ENCODE measurements at regions of chr2 and their contacts with region 1.

Region 1: DNA sequence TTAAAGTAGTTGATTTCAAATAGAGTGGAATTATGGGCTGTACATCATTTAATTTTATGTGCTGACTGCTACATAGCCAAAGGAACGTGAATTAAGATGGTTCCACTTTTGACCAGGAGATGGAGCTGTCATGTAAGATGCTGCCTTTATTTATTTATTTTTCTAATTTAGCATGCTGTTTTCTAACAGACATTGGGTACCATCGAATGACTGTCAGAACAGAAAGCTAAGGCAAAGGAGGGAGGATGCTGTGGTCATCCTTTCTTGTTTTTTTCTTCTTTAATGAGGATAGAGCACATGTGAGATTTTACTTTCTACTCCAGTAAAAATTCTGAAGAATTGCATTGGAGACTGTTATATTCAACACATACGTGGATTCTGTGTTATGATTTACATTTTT is at the start of gene SCN2A:
- DNase-seq: no peak
- H3K4me3 ChIP-seq: no peak within 1 kb of the TSS
- H3K27ac ChIP-seq: no peak within 1 kb of the TSS
- H3K4me1 ChIP-seq: no peaks in the 10 kb centered on the region
- H3K27me3 ChIP-seq: no peaks in the 10 kb centered on the region
- CTCF ChIP-seq: peak in 2 of 3 experiments; percentile 61 to 63; a peak in 3 of 4 replicates
- EP300 ChIP-seq: no peak
- POLR2A ChIP-seq: no peak
- RAD21 ChIP-seq: peak; percentile 80
- total RNA-seq, gene SCN2A: 0.61 and 1.1 TPM in 2 replicates

Region 2: GRCh38 chr2:165173215-165173614 is 66.0 kb before region 1 on chr2:
- CTCF ChIA-PET with region 1: no interaction called
- POLR2A ChIA-PET with region 1: no interaction called
- DNase-seq: no peak
- H3K4me3 ChIP-seq: no peak overlapping the region
- H3K27ac ChIP-seq: no peak overlapping the region
- H3K4me1 ChIP-seq: no peaks in the 10 kb centered on the region
- H3K27me3 ChIP-seq: peaks cover 0 to 1% (median 0%) of the 10 kb centered on the region in 4 experiments; a peak in 1 of 7 replicates
- CTCF ChIP-seq: no peak
- EP300 ChIP-seq: no peak
- POLR2A ChIP-seq: no peak
- RAD21 ChIP-seq: no peak

Region 3: DNA sequence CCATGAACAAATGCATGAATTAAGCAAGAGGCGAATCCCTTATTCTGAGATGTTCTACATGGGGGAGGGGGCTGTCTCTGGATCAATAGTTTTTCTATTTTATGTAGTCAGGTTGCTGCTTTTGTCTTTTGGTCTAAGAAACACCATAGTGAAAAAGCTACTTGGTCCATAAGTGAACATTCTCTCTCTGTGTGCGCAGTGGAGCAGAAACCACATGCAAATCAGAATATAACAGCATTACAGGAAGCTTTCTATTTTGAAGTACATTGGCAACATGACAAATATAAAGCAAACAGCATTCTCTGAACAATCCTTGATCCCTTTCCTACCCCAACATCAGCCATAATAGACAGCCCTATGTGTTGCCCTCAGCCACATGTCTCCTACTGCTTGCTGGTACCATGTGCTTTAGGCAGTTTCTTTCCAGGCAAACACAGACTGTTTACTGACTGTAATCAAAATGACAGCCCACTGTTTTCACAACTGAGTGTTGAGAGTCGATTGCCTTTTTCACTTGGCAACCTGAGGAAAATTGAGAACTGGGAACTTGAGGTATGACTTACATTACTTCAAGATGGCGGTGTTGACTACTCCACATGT is 46.0 kb before region 1 on chr2:
- CTCF ChIA-PET with region 1: no interaction called
- POLR2A ChIA-PET with region 1: no interaction called
- DNase-seq: no peak
- H3K4me3 ChIP-seq: no peak overlapping the region
- H3K27ac ChIP-seq: no peak overlapping the region
- H3K4me1 ChIP-seq: peaks cover 0 to 2% (median 0%) of the 10 kb centered on the region in 4 experiments; a peak in 1 of 7 replicates
- H3K27me3 ChIP-seq: no peaks in the 10 kb centered on the region
- CTCF ChIP-seq: no peak
- EP300 ChIP-seq: no peak
- POLR2A ChIP-seq: no peak
- RAD21 ChIP-seq: no peak

Region 4: DNA sequence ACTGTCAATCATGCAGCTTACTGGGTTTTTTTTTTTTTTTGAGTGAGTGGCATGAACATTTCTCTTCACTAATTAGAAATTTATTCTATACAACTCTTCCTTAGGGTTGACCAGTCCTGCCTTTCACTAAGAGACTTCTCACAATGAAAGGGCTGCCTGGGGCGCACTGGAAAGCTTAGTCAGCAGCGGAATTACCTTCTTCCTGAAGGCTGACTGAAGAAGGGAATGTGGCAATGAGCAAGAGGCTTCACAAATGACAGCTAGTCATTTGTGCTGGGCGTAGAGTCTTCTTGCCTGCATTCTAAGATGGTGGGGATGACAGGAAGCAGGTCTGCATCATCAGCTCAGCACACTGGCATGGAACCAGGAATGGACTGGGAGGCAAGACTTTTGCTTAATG is 19.7 kb before region 1 on chr2:
- CTCF ChIA-PET with region 1: interaction called, 12 read pairs
- POLR2A ChIA-PET with region 1: no interaction called
- DNase-seq: no peak
- H3K4me3 ChIP-seq: no peak overlapping the region
- H3K27ac ChIP-seq: no peak overlapping the region
- H3K4me1 ChIP-seq: no peaks in the 10 kb centered on the region
- H3K27me3 ChIP-seq: no peaks in the 10 kb centered on the region
- CTCF ChIP-seq: no peak
- EP300 ChIP-seq: no peak
- POLR2A ChIP-seq: no peak
- RAD21 ChIP-seq: no peak

Region 5: DNA sequence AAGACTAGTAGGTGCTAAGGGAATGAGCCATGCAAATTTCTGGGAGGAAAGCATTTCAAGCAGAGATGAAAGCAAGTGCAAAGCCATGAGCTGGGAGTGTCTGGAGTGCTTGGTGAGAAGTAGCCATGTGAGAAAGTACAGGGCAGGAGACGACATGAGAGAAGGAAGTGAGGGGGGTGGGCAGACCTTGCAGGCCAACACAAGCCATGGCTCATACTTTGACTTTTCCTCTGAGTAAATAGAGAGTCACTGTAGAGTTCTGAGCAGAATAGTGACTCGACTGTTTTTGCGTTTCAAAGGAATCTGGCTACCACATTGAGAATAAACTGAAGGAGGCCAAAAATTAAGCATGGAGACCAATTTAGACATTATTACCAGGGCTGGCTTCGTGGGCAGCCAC is 42.2 kb after region 1 on chr2:
- CTCF ChIA-PET with region 1: no interaction called
- POLR2A ChIA-PET with region 1: no interaction called
- DNase-seq: no peak
- H3K4me3 ChIP-seq: no peak overlapping the region
- H3K27ac ChIP-seq: no peak overlapping the region
- H3K4me1 ChIP-seq: 0 out of 7 replicates have a peak, but pooled peaks cover 0 to 2% (median 0%) of the 10 kb centered on the region in 4 experiments
- H3K27me3 ChIP-seq: no peaks in the 10 kb centered on the region
- CTCF ChIP-seq: no peak
- EP300 ChIP-seq: no peak
- POLR2A ChIP-seq: no peak
- RAD21 ChIP-seq: no peak

Region 6: DNA sequence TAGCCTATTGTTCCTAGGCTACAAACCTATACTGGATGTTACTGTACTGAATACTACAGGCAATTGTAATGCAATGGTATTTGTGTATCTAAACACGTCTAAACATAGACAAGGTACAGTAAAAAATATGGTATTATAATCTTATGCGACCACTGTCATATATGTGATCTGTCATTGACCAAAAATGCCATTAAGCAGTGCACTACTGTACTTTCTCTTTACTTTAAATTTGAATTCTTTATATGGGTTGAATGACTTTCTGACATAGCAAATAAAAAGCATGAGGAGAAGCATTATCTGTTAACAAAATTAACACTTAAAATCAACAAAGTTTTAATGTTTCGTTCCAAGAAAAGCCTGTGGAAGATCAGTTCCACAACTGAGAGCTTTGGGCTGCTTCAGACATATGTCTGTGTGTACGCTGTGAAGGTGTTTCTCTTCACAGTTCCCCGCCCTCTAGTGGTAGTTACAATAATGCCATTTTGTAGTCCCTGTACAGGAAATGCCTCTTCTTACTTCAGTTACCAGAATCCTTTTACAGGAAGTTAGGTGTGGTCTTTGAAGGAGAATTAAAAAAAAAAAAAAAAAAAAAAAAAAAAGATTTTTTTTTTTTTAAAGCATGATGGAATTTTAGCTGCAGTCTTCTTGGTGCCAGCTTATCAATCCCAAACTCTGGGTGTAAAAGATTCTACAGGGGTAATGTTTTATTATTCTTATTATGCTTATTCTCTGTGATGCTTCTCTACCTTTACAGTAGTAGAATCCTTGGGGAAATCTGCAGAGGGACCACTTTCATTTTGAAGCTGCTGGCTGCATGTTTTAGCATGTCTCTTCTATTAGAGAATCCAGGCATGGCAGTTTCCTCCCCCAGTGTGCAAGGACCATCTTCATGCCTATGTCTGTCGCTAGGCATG is 54.5 kb after region 1 on chr2:
- CTCF ChIA-PET with region 1: interaction called, 11 read pairs
- POLR2A ChIA-PET with region 1: no interaction called
- DNase-seq: peak in 1 of 2 experiments; percentile 17
- H3K4me3 ChIP-seq: peak overlapping the region in 3 of 4 experiments; percentile 10 to 49 (median 17); a peak in 3 of 8 replicates
- H3K27ac ChIP-seq: no peak overlapping the region
- H3K4me1 ChIP-seq: peaks cover 0 to 2% (median 0%) of the 10 kb centered on the region in 4 experiments; a peak in 2 of 7 replicates
- H3K27me3 ChIP-seq: no peaks in the 10 kb centered on the region
- CTCF ChIP-seq: peak in 2 of 3 experiments; percentile 68 to 78; a peak in 3 of 4 replicates
- EP300 ChIP-seq: no peak
- POLR2A ChIP-seq: no peak
- RAD21 ChIP-seq: peak; percentile 63 to 65

Measured in H1 (cell line).